Colonic mucosa (tissue), 4 donors: ENCODE measurements at regions of chr4 and their contacts with region 1.

Region 1: GRCh38 chr4:54233277-54233696 is 4.2 kb downstream of the PDGFRA start:
- DNase-seq: peak; percentile 83
- H3K4me3 ChIP-seq: peak overlapping the region; percentile 46
- H3K27ac ChIP-seq: peak overlapping the region; percentile 57
- H3K4me1 ChIP-seq: peaks cover 23% of the 10 kb centered on the region
- H3K27me3 ChIP-seq: peaks cover 48% of the 10 kb centered on the region
- CTCF ChIP-seq: peak; percentile 56

Region 2: DNA sequence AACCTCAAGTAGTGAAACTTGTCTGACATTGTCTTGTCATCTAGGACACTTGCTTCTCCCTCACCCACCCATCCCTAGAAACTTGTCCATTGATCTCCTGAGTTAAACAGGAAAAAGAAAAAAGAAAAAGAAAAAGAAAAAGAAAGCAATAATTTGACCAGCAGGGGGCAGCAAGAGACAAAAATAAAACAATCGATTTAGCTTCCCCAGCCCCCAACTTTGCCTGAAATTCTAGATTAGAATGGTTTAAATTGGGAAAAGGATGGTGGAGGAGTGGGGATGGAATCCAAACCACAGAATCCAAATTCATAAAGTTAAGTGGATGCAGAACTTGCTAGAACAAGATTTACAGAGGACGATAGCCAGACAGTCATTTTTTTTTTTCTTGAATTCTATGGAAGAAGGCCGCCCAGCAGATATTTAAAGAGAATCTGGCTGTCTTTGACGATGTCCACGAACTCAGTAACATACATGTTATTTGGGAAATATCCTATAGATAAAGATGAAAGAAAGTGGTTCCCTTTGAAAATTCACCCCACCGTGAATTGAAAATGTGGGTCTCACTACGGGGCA is 1857.1 kb before region 1 on chr4:
- intact Hi-C with region 1: loop called (anchors 5 kb)
- DNase-seq: peak; percentile 24
- H3K4me3 ChIP-seq: no peak overlapping the region
- H3K27ac ChIP-seq: no peak overlapping the region
- H3K4me1 ChIP-seq: no peaks in the 10 kb centered on the region
- H3K27me3 ChIP-seq: no peaks in the 10 kb centered on the region
- CTCF ChIP-seq: peak; percentile 55

Region 3: DNA sequence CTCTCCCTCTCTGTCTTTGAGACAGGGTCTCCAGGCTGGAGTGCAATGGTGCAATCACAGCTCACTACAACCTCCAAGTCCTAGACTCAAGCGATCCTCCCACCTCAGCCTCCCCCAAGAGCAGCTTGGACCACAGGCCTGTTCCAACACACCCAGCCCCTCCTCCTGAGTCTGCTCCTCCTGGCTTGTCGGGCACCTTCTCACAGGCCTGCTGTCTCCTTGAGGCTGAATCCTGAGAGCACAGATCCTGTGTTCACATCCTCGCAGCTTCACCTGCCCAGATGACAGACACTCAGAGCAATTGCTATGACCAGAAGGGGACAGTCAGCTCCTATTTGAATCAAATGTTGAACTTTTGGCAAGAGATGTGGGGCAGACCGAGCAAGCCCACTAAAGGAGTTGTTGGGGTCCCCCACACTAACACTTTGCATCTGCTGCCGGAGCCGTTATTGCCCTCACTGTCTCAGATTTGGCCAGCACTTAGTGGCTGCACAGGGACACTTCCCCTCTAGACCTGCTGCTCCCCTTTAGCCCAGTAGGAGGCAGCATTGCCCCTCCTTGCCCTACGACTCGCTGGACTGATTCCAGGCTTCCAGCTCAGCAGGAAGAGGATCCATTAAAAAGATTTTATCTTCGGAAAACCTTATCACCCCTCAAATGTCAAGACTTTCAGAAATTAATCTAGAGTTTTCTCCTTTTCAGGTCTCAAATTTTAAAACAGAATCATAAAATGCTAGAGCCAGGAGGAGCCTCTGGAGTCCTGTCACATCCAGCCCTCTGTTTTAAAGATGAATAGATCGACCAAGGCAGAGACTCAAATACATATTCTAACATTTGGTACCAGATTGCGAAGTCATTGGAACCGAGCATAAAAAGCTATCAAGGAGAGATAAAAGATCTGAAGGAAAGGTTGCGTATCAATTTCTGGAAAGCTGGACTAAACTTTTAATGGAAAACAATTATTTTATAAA is 1687.9 kb before region 1 on chr4:
- intact Hi-C with region 1: loop called (anchors 10 kb)
- DNase-seq: peak; percentile 75
- H3K4me3 ChIP-seq: no peak overlapping the region
- H3K27ac ChIP-seq: no peak overlapping the region
- H3K4me1 ChIP-seq: no peaks in the 10 kb centered on the region
- H3K27me3 ChIP-seq: no peaks in the 10 kb centered on the region
- CTCF ChIP-seq: peak; percentile 88

Region 4: GRCh38 chr4:53015681-53016080 is 1217.6 kb before region 1 on chr4:
- intact Hi-C with region 1: loop called (anchors 5 kb)
- DNase-seq: peak; percentile 29
- H3K4me3 ChIP-seq: no peak overlapping the region
- H3K27ac ChIP-seq: no peak overlapping the region
- H3K4me1 ChIP-seq: no peaks in the 10 kb centered on the region
- H3K27me3 ChIP-seq: no peaks in the 10 kb centered on the region
- CTCF ChIP-seq: peak; percentile 64

Region 5: DNA sequence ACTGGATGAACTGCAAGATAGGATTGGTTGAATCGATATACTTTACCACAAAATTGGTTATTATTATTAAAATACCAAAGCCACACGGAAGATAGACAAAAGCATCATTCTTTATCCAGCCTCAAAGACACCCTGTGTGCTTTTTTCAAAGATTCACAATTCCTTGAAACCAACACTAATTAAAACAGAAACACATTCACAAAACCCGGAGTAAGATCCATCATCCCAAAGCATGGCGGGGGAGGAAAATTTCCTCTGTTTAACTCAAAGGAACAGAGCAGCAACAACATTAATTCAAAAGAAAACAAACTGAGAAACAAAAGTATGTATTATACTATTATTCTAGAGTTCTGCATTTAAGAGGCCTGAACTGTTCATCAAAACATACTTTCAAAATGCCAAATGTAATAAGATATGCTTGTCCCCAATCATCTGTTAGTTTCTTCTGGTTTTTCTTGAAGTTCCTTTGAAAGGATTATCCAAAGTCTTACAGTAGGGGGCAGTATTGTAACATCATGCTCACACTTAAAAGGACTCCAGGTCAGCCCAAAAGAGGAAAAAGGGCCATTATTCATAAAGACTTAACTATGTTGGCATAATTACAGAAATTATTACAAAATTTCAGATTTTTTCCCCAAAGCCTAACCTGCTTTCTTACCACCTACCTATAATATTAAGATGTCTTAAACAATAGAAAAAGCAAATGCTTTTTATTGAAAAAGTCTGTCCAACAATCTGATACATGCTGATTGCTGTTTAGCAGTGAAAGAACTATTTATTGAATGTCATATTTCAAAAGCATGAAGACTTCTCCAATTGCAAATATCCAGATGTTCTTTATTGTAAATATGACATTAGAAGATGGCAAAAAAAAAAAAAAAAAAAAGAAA is 1036.2 kb before region 1 on chr4:
- intact Hi-C with region 1: loop called (anchors 5 kb)
- DNase-seq: no peak
- H3K4me3 ChIP-seq: no peak overlapping the region
- H3K27ac ChIP-seq: no peak overlapping the region
- H3K4me1 ChIP-seq: no peaks in the 10 kb centered on the region
- H3K27me3 ChIP-seq: no peaks in the 10 kb centered on the region
- CTCF ChIP-seq: peak; percentile 74

Region 6: DNA sequence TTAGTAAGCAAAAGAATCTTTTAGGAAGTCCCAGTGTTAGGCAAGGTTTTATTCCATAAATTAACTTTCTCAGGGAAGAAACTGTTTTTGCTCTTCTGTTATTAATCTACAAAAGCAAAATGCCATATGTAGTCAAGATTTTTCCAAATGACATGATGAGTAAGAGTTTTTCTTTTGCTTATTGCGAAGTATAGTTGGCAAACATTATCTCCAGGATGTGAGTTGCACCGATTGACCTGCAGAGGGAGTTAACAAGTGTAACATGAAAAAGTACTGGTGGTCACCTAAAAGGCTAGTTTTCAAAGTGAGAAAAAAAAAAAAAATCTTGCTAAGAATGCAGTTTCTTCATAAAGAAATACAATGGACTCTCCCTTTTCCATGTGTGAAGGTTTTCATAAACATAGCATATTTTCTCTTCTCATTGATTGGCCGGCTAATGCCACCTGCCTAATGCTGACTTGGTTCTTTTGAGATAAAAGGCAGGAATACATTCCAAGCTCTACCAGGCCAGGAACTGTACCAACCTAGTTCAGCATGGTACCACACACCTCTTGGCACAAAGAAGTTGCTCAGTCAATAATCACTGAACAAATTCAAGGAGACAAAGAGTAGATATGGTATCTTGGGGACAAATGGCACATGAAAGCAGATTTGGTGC is 742.2 kb before region 1 on chr4:
- intact Hi-C with region 1: loop called (anchors 10 kb)
- DNase-seq: peak; percentile 36
- H3K4me3 ChIP-seq: no peak overlapping the region
- H3K27ac ChIP-seq: peak overlapping the region; percentile 30
- H3K4me1 ChIP-seq: no peaks in the 10 kb centered on the region
- H3K27me3 ChIP-seq: no peaks in the 10 kb centered on the region
- CTCF ChIP-seq: peak; percentile 57

Region 7: DNA sequence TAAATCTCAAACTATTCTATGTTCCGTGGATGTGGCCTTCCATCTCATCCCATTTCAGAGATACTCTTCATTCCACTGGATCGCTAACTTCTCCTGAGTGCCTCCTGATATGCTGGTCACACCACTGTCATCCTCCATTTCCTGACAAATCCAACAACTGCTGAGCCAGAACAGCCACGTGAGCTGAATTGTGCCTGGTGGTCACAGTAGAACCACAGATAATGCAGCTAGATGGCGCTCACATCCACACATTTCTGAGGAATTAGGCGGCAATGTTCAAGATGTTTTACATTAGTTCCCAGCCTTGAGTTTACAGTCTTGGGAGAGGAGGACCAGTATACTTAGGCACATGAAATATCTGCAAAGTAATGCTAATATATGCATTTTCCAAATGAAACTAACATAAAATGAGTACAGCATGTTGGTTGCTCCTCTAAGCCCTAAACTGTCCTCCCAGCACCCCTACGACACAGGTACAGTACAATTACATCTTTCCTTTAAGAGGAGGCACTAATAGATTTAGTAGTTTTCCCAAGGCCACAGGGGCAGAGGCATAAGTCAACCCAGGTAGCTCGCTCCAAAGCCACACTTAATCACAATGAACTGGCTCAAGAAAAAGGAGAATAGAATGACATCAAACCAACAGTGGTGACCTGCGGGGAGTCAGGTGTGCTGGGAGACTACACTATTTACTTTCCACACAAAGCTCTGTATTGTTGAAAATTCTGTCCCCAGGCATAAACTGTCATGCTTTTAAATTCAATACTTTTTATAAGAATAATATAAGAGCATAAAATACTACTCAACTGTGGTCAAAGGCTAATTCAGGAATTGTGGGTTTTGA is 303.1 kb before region 1 on chr4:
- intact Hi-C with region 1: loop called (anchors 5 kb)
- DNase-seq: peak; percentile 71
- H3K4me3 ChIP-seq: no peak overlapping the region
- H3K27ac ChIP-seq: no peak overlapping the region
- H3K4me1 ChIP-seq: no peaks in the 10 kb centered on the region
- H3K27me3 ChIP-seq: no peaks in the 10 kb centered on the region
- CTCF ChIP-seq: peak; percentile 66

Region 8: GRCh38 chr4:54005475-54005874 is 227.8 kb before region 1 on chr4:
- intact Hi-C with region 1: no loop called
- DNase-seq: no peak
- H3K4me3 ChIP-seq: no peak overlapping the region
- H3K27ac ChIP-seq: no peak overlapping the region
- H3K4me1 ChIP-seq: no peaks in the 10 kb centered on the region
- H3K27me3 ChIP-seq: no peaks in the 10 kb centered on the region
- CTCF ChIP-seq: no peak